MCF 10A (cell line): ENCODE measurements at regions of chr10 and their contacts with region 1.

Region 1: GRCh38 chr10:45235798-45236231 is 79.6 kb downstream of the OR13A1 start:
- DNase-seq: peak; percentile 34
- H3K4me3 Mint-ChIP-seq: no peak overlapping the region
- H3K27ac Mint-ChIP-seq: no peak overlapping the region
- H3K4me1 Mint-ChIP-seq: no peaks in the 10 kb centered on the region
- H3K27me3 Mint-ChIP-seq: no peaks in the 10 kb centered on the region
- CTCF ChIP-seq: no peak

Region 2: DNA sequence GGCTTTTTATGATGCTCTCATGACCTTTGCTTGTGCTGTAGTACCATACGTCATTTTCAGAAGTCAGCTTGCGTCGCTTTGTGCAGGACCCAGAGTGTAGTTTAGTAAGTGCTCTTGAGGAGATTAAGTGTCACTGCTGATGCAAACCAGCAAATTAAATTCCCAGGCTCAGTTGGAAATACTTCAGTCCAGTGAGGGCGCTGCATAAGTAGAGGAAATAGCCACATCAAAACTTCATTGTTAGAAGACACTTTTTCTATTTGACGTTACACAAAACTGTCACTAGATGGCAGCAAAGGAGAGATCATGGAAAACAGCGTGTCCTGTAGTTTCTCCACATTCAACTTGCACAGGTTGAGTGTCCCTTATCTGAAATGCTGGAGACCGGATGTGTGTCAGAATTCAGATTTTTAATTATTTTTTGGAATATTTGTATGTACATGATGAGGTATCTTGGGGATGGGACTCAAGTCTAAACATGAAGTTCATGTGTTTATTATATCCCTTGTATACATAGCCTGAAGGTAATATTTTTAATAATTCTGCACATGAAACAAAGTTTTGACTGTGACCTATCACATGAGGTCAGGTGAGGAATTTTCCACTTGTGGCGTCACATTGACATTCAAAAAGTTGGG is 227.2 kb before region 1 on chr10:
- CTCF ChIA-PET with region 1: interaction called, 20 read pairs
- POLR2A ChIA-PET with region 1: no interaction called
- intact Hi-C with region 1: loop called (anchors 2 kb)
- DNase-seq: peak; percentile 89
- H3K4me3 Mint-ChIP-seq: no peak overlapping the region
- H3K27ac Mint-ChIP-seq: no peak overlapping the region
- H3K4me1 Mint-ChIP-seq: no peaks in the 10 kb centered on the region
- H3K27me3 Mint-ChIP-seq: no peaks in the 10 kb centered on the region
- CTCF ChIP-seq: peak; percentile 63

Region 3: DNA sequence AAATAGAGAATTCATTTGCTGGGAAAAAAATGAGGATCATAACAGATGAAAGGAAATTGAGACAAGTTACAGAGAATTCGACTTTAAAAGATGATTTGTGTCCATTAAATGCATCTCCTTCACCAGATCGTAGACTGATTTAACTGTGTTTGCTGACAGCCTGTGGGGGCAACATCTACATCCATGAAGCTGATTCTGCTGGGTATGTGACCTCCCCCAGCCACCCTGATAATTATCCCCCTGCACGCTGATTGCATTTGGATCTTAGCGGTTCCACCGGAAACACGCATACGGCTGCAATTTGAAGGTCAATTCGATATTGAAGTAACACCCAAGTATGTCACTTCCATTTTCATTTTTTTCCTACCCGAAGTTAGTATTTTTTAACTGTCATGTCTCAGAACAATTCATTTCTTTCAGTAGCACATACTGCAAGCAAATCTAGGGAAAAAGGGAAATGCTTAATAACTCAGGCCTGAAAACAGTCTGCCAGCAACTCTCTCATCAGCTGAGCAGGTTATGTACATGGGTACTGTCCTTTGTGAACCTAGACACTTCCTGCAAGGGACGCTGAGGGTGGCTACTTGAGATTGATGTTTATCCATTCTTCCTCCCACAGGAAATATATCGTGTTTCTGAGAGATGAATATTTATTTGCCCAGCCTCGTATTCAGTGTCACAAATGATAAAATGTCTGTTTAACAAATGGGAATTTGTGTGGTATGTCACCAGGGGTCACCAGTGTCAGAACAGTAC is 100.2 kb before region 1 on chr10:
- CTCF ChIA-PET with region 1: no interaction called
- POLR2A ChIA-PET with region 1: no interaction called
- intact Hi-C with region 1: no loop called
- DNase-seq: no peak
- H3K4me3 Mint-ChIP-seq: no peak overlapping the region
- H3K27ac Mint-ChIP-seq: no peak overlapping the region
- H3K4me1 Mint-ChIP-seq: no peaks in the 10 kb centered on the region
- H3K27me3 Mint-ChIP-seq: no peaks in the 10 kb centered on the region
- CTCF ChIP-seq: no peak

Region 4: GRCh38 chr10:45220931-45221330 is 14.9 kb before region 1 on chr10:
- CTCF ChIA-PET with region 1: interaction called, 39 read pairs
- POLR2A ChIA-PET with region 1: no interaction called
- intact Hi-C with region 1: no loop called
- DNase-seq: no peak
- H3K4me3 Mint-ChIP-seq: no peak overlapping the region
- H3K27ac Mint-ChIP-seq: no peak overlapping the region
- H3K4me1 Mint-ChIP-seq: no peaks in the 10 kb centered on the region
- H3K27me3 Mint-ChIP-seq: no peaks in the 10 kb centered on the region
- CTCF ChIP-seq: no peak

Region 5: DNA sequence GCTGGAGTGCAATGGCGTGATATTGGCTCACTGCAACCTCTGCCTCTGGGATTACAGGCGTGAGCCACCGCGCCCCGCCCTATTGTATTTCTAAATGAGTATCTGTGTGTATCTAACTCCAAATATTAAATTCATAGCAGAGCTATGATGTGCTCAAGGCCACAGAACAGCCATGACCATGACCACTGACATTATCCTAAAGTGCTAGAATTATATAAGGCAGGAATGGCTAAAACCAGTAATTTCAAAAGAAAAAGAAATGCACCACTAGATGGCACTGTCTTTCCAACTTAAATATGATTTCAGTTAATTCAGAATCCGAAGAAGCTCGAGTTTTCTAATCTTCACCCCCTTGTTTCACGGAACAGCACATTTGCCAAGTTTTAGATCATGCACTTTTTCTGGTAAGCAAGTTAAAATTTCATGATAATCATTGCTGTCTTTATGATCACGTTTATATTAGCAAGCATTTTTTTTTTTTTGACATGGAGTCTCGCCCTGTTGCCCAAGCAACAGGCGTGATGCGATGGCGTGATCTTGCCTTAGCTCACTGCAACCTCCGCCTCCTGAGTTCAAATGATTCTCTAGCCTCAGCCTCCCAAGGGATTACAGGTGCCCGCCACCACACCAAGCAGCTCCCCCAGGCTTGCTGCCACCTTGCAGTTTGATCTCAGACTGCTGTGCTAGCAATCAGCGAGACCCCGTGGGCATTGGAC is 14.3 kb after region 1 on chr10:
- CTCF ChIA-PET with region 1: interaction called, 39 read pairs
- POLR2A ChIA-PET with region 1: no interaction called
- intact Hi-C with region 1: no loop called
- DNase-seq: peak; percentile 52
- H3K4me3 Mint-ChIP-seq: no peak overlapping the region
- H3K27ac Mint-ChIP-seq: no peak overlapping the region
- H3K4me1 Mint-ChIP-seq: no peaks in the 10 kb centered on the region
- H3K27me3 Mint-ChIP-seq: peaks cover 22% of the 10 kb centered on the region
- CTCF ChIP-seq: peak; percentile 38

Region 6: DNA sequence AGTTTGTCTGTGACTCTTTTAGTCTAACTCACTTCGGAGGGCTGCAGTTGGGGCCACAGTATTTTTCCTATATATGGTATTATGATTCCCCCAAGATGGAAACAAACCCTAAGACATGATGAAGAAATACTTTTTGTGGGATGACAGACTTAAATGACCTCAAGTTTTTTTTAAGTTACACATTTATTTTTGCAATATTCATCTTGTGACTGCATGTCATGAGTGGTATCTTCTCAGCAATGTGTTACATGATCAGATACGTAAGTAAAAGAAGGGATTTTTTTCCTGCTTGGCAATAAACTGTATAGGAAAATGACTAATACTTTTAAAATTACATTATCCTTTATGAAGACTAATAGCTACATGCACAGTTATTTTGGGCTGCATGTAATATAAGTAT is 21.8 kb after region 1 on chr10:
- CTCF ChIA-PET with region 1: interaction called, 39 read pairs
- POLR2A ChIA-PET with region 1: no interaction called
- intact Hi-C with region 1: no loop called
- DNase-seq: no peak
- H3K4me3 Mint-ChIP-seq: no peak overlapping the region
- H3K27ac Mint-ChIP-seq: no peak overlapping the region
- H3K4me1 Mint-ChIP-seq: no peaks in the 10 kb centered on the region
- H3K27me3 Mint-ChIP-seq: peaks cover 31% of the 10 kb centered on the region
- CTCF ChIP-seq: no peak